Esophagus muscularis mucosa (tissue), 4 donors: ENCODE measurements at regions of chr7 and their contacts with region 1.

Region 1: GRCh38 chr7:149497456-149498261 is at the start of gene ZNF746:
- DNase-seq: peak; percentile 92
- H3K4me3 ChIP-seq: peak within 1 kb of the TSS; percentile 82 to 95 (median 88)
- H3K27ac ChIP-seq: peak within 1 kb of the TSS; percentile 91 to 94 (median 94)
- H3K4me1 ChIP-seq: peaks cover 18 to 32% (median 31%) of the 10 kb centered on the region in 4 donors
- H3K27me3 ChIP-seq: peaks cover 0 to 8% (median 0%) of the 10 kb centered on the region in 4 donors
- CTCF ChIP-seq: peak; percentile 41 to 79 (median 78)
- EP300 ChIP-seq: no peak
- POLR2A ChIP-seq: no peak
- total RNA-seq, gene ZNF746: 20.9 to 28.7 (median 27.9) TPM

Region 2: GRCh38 chr7:149624419-149625339 is 127.0 kb after region 1 on chr7:
- intact Hi-C with region 1: loop called (anchors 5 kb)
- DNase-seq: peak; percentile 95
- H3K4me3 ChIP-seq: peak overlapping the region; percentile 92 to 99 (median 98)
- H3K27ac ChIP-seq: peak overlapping the region; percentile 88 to 95 (median 94)
- H3K4me1 ChIP-seq: peaks cover 18 to 39% (median 33%) of the 10 kb centered on the region in 4 donors
- H3K27me3 ChIP-seq: no peaks in the 10 kb centered on the region
- CTCF ChIP-seq: peak; percentile 95 to 100 (median 100)
- EP300 ChIP-seq: no peak
- POLR2A ChIP-seq: no peak